AG04449 (cell line): ENCODE measurements at regions of chr12 and their contacts with region 1.

Region 1: DNA sequence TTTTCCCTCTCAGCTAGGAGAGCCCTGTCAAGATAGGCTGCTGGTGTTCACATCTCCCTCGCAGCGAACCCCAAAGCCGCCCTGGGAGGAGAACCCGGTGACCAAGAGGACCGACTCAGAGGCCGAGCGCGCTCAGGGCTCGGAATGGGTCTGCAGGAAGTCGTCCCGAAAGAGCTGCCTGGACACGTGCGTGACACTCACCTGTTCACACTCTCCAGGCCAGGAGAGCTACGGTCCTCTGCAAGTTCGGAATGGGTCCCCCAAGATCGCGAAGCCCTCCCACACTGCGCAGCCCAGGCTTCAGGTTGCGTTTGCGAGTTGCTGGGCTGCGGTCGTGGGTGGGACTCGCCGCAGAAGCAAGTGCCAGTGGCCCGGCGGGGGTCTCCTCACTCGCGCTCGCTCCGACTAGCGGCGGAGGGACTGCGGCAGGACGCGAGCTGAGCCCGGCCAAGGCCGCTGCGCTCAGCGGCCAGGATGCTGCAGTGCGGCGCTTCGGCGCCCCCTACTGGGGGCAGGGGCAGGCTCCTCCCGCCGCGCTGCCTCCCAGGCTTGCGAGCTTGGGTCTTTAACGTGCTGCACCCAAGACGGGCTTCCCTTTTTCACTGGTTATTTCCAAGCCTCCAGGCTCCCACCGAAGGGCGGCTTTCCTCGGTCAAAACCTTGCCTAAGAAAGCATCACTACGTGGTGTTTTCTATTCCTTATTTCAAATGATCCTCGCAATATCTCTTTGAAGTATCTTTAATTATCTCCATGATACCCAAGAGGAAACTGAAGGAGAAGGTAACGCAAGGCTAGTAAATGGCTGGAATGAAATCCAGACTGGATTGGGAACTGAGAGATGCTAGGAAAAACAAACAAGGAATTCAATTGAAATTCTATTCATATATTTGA is at the start of gene RERG:
- DNase-seq: no peak
- H3K4me3 ChIP-seq: peak within 1 kb of the TSS; percentile 53
- CTCF ChIP-seq: peak; percentile 93

Region 2: GRCh38 chr12:14810953-14811483 is 410.2 kb before region 1 on chr12:
- CTCF ChIA-PET with region 1: interaction called, 17 read pairs
- POLR2A ChIA-PET with region 1: no interaction called
- DNase-seq: no peak
- H3K4me3 ChIP-seq: no peak overlapping the region
- CTCF ChIP-seq: peak; percentile 42

Region 3: GRCh38 chr12:14928969-14929368 is 292.3 kb before region 1 on chr12:
- CTCF ChIA-PET with region 1: no interaction called
- POLR2A ChIA-PET with region 1: no interaction called
- DNase-seq: no peak
- H3K4me3 ChIP-seq: no peak overlapping the region
- CTCF ChIP-seq: no peak

Region 4: GRCh38 chr12:15151161-15152120 is 69.8 kb before region 1 on chr12:
- CTCF ChIA-PET with region 1: interaction called, 38 read pairs
- POLR2A ChIA-PET with region 1: no interaction called
- DNase-seq: no peak
- H3K4me3 ChIP-seq: no peak overlapping the region
- CTCF ChIP-seq: peak; percentile 18

Region 5: GRCh38 chr12:15181017-15181683 is 40.1 kb before region 1 on chr12:
- CTCF ChIA-PET with region 1: interaction called, 10 read pairs
- POLR2A ChIA-PET with region 1: no interaction called
- DNase-seq: no peak
- H3K4me3 ChIP-seq: no peak overlapping the region
- CTCF ChIP-seq: no peak

Region 6: DNA sequence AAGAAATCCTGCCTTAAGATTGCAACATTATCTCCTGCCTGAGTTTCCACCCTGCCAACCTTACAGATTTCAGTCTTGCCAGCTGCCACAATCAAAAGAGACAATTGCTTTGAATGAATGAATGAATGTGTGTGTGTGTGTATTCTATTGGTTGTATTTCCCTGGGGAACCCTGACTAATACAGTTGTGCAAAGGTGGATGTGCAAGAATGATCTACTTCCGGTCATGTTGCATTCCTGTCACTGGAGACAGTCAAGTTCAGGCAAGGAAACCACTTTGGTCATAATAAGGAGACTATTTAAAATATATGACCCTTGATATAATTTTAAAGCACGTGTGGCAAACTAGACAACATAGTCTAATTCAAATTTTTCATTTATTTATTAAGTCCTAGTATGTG is 13.1 kb before region 1 on chr12:
- CTCF ChIA-PET with region 1: interaction called, 30 read pairs
- POLR2A ChIA-PET with region 1: no interaction called
- DNase-seq: no peak
- H3K4me3 ChIP-seq: no peak overlapping the region
- CTCF ChIP-seq: peak; percentile 21

Region 7: DNA sequence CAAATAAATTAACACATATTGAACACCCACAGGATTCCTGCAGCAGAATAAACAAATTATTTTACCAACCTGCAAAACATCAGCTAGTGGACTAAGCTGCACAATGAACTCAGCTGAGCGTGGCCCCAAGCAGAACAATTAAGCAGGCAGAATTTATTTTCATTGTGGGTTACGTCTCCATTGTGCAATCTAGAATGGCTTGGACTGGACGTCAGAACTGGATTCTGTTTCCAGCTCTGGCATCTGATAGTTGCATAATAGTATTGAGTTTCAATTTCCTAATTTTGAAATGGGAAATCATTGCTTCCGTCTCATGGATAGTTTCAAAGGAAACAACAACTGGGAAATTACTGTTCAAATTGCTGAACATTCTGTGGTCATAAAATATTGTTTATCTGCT is 35.5 kb after region 1 on chr12:
- CTCF ChIA-PET with region 1: interaction called, 12 read pairs
- POLR2A ChIA-PET with region 1: no interaction called
- DNase-seq: no peak
- H3K4me3 ChIP-seq: no peak overlapping the region
- CTCF ChIP-seq: no peak

Region 8: GRCh38 chr12:15522565-15523187 is 301.4 kb after region 1 on chr12:
- CTCF ChIA-PET with region 1: interaction called, 12 read pairs
- POLR2A ChIA-PET with region 1: no interaction called
- DNase-seq: no peak
- H3K4me3 ChIP-seq: no peak overlapping the region
- CTCF ChIP-seq: peak; percentile 22